Adrenal gland (tissue), 19 donors: ENCODE measurements at regions of chr1 and their contacts with region 1.

Region 1: DNA sequence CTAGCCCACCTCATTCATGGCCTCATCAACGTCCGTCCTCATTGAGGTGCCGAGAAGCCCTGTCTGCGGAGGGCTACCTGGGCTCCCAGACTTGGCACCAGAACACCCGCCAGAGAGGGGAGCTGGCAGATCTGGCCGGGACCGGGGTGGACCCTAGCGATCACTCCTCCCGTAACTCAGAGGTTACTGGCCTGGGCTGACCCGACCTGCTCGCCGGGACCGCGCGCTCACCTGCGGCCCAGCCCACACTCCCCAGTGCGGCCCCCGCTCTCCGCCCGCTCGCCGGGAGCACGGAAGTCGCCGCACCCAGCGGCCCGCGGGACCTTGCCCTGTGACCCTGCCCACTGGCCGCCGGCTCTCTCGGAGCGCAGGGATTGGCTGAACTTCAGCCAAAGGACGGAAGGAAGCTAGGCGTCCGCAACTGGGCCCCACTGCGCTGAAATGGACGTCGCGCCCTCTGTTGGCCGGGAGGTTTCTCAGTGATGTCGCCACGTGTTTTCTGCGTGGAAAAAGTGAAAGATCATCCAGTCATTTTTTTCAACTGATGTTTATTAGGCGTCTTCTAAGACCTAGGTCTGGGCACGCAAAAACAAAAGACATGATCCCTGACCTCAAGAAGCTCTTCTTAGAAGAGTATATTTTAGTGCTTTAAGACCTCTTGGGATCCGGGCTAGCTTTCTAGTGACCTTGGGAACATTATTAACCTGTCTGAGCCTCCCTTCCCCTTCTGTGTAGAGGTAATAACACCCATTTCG is at the start of gene SMIM12:
- DNase-seq: peak; percentile 94 to 98 (median 97)
- H3K4me3 ChIP-seq: peak within 1 kb of the TSS; percentile 25 to 96 (median 76)
- H3K27ac ChIP-seq: peak within 1 kb of the TSS; percentile 80 to 98 (median 95)
- H3K4me1 ChIP-seq: peaks cover 17 to 18% of the 10 kb centered on the region in 2 donors
- H3K27me3 ChIP-seq: no peaks in the 10 kb centered on the region
- CTCF ChIP-seq: peak; percentile 72 to 94 (median 88)
- POLR2A ChIP-seq: peak; percentile 93
- total RNA-seq, gene SMIM12: 39.6 to 109 (median 54.6) TPM

Region 2: GRCh38 chr1:34984793-34985608 is 125.4 kb after region 1 on chr1 and contains the start of gene TMEM35B:
- intact Hi-C with region 1: loop called in 1 of 2 experiments (anchors 10 kb)
- DNase-seq: peak; percentile 62 to 78 (median 69)
- H3K4me3 ChIP-seq: peak within 1 kb of the TSS; percentile 20 to 95 (median 72)
- H3K27ac ChIP-seq: peak within 1 kb of the TSS; percentile 71 to 96 (median 89)
- H3K4me1 ChIP-seq: peaks cover 12 to 40% of the 10 kb centered on the region in 2 donors
- H3K27me3 ChIP-seq: no peaks in the 10 kb centered on the region
- CTCF ChIP-seq: peak in 2 of 6 experiments; percentile 18 to 34
- POLR2A ChIP-seq: peak; percentile 67 to 73
- total RNA-seq, gene TMEM35B: 19.8 to 88.9 (median 48.9) TPM